Activated CD8-positive, alpha-beta T cell treated with anti-CD3 and anti-CD28 coated beads, Interleukin-2, amount 10 ng/mL, durations not matched to agents 7 days and 5 days (primary cell): ENCODE measurements at regions of chrX and their contacts with region 1.

Region 1: GRCh38 chrX:129823115-129823514 is 20.6 kb downstream of the ZDHHC9 start:
- DNase-seq: peak; percentile 70
- ATAC-seq: peak; percentile 82
- H3K4me3 Mint-ChIP-seq: no peak overlapping the region
- H3K27ac Mint-ChIP-seq: no peak overlapping the region
- H3K4me1 Mint-ChIP-seq: peaks cover 14% of the 10 kb centered on the region
- H3K27me3 Mint-ChIP-seq: no peaks in the 10 kb centered on the region

Region 2: GRCh38 chrX:129654419-129655165 is 168.5 kb before region 1 on chrX and contains the start of gene APLN:
- CTCF ChIA-PET with region 1: interaction called, 10 read pairs
- POLR2A ChIA-PET with region 1: no interaction called
- DNase-seq: peak; percentile 26
- ATAC-seq: peak; percentile 79
- H3K4me3 Mint-ChIP-seq: peak within 1 kb of the TSS; percentile 66
- H3K27ac Mint-ChIP-seq: no peak within 1 kb of the TSS
- H3K4me1 Mint-ChIP-seq: peaks cover 7% of the 10 kb centered on the region
- H3K27me3 Mint-ChIP-seq: peaks cover 9% of the 10 kb centered on the region
- total RNA-seq, gene APLN: 2.1 to 2.7 TPM

Region 3: GRCh38 chrX:129737916-129738315 is 85.2 kb before region 1 on chrX:
- CTCF ChIA-PET with region 1: interaction called, 12 read pairs
- POLR2A ChIA-PET with region 1: no interaction called
- DNase-seq: no peak
- ATAC-seq: no peak
- H3K4me3 Mint-ChIP-seq: no peak overlapping the region
- H3K27ac Mint-ChIP-seq: peak overlapping the region; percentile 46
- H3K4me1 Mint-ChIP-seq: peaks cover 57% of the 10 kb centered on the region
- H3K27me3 Mint-ChIP-seq: no peaks in the 10 kb centered on the region